GM10248 (cell line): ENCODE measurements at regions of chr15 and their contacts with region 1.

Region 1: DNA sequence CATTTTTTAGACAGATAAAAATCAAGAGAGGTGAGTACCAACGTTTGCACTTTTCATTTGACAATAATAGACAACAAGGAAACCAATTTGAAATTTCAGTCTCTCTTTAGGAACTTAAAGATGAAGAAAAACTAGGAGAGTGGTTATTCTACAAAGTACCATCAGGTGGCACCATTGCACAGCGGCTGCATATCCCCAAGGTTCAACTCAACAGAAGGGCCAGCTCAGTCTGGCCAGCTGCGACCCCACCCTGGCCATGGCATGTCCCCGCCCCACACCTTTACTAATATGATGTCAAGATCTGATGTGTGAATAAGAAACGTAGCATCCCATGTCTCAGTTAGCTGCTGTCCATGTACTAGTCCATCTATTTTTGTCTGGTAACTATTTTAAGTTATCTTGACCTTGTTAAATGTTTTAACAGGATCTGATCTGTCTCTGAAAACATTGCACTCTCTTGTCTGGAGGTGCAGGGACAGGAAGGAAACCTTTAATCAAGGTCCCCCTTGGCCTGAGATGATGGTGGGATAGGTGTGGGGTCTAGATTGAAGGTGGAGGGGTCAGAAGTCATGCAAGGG is 35.5 kb upstream of the CGNL1 start:
- DNase-seq: peak; percentile 59
- CTCF ChIP-seq: peak; percentile 75

Region 2: GRCh38 chr15:57327985-57328471 is 12.7 kb before region 1 on chr15:
- CTCF ChIA-PET with region 1: interaction called, 21 read pairs
- POLR2A ChIA-PET with region 1: no interaction called
- DNase-seq: no peak
- CTCF ChIP-seq: no peak

Region 3: GRCh38 chr15:57353317-57353804 is 12.6 kb after region 1 on chr15:
- CTCF ChIA-PET with region 1: interaction called, 17 read pairs
- POLR2A ChIA-PET with region 1: no interaction called
- DNase-seq: no peak
- CTCF ChIP-seq: no peak

Region 4: DNA sequence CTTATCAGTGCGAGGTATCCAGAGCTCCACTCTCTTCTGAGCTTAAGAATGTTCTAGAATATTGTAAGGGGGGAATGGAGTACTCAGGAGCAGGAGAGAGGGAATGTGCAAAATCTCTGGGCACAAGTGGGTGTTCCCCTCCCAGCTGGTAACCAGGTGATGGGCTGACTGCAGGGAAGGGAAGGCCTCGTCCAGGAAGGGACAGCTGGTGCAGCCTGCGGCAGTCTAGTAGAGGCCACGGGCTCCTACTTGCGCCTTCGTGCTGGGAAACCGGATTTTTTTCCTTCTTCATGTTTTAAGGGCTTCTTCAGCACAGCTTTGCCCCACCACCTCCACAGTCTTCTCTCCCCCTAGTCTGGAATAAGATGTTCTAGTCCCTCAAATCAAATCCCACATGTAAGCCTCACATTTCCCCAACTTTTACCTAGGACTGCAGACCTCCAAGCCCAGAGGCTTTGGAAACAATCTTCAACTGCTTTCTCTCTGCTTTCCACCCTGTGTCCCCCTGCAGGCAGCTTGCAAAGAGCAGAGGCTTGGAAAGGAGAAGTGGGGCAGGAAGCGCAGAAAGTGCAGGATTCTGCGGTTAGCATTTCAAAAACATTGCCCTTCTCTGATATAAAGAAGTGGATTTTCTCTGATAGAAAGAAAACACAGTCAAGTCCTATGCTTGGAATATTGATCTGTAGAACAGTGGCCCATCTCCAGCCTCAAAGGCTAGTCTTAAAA is 23.7 kb after region 1 on chr15:
- CTCF ChIA-PET with region 1: interaction called, 13 read pairs
- POLR2A ChIA-PET with region 1: no interaction called
- DNase-seq: no peak
- CTCF ChIP-seq: no peak

Region 5: DNA sequence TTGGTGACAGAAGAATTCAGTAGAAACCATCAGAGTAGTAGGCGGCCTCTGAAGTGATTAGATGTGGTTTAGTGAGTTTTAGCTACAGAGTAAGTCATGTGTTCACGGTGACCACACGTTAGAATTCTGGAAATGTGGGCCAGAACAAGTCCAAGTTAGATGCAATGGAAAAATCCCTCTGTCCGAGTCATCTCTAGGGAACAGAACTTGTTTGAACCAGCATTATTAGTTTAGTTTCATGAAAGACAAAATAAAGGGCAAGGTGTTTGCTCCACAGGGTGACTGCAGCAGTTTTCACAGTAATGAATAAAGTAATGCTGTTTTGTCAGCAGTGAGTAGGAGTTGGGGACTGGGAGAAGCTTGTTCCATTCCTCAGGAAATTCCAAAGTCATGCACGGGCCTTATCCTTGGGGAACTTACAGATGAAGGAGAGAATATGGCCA is 135.8 kb after region 1 on chr15:
- CTCF ChIA-PET with region 1: no interaction called
- POLR2A ChIA-PET with region 1: no interaction called
- DNase-seq: no peak
- CTCF ChIP-seq: no peak

Region 6: DNA sequence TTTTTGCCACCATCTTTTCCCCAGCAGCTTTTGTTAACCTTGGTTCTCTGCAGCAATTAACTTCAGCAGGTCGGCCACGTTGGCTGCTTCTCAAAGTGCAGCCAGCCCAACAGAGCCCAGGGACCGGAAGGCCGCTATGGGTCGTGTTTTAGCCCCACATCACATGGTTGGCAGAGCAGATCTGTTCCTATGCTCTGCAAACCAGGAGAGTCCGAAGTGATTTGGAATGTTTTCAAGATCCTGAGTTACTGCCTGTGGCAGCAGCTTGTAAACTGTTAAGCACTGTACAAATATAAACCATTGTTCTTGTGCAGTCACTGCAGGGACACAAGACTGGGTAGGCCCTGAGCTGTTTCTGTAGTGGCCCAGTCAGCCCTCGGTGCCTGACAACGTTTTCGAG is 181.4 kb after region 1 on chr15:
- CTCF ChIA-PET with region 1: interaction called, 134 read pairs
- POLR2A ChIA-PET with region 1: no interaction called
- DNase-seq: no peak
- CTCF ChIP-seq: no peak

Region 7: DNA sequence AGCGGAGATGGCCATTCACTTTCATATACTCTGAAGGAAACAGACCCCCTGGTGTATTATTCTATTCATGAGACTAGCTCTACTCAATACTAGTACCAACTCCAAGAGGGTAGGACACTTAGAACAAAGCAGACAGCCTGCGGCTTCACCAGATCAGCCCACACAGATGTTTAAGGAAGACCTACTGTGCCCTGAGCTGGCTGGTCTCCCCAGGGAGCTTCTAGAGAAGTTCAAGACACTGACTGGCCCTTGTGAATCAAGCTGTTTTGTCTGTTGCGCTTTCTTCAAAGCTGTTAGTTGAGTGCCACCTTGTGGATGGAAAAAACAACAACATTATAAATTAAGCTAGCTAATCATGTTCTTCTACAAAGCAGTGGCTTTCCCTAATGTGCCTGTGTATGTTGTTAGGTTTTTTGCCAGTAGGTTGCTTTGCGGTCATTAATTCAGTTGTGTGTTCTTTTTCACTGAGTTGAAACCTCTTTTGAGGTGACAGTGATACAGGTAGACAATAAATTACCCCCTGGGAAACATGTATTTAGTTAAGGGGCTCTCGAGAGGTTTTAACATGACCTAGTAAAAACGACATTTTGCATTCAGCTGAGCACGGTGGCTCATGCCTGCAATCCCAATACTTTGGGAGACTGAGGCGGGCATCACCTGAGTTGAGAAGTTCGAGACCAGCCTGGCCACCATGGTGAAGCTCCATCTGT is 186.8 kb after region 1 on chr15:
- CTCF ChIA-PET with region 1: interaction called, 134 read pairs
- POLR2A ChIA-PET with region 1: no interaction called
- DNase-seq: peak; percentile 58
- CTCF ChIP-seq: peak; percentile 43

Region 8: DNA sequence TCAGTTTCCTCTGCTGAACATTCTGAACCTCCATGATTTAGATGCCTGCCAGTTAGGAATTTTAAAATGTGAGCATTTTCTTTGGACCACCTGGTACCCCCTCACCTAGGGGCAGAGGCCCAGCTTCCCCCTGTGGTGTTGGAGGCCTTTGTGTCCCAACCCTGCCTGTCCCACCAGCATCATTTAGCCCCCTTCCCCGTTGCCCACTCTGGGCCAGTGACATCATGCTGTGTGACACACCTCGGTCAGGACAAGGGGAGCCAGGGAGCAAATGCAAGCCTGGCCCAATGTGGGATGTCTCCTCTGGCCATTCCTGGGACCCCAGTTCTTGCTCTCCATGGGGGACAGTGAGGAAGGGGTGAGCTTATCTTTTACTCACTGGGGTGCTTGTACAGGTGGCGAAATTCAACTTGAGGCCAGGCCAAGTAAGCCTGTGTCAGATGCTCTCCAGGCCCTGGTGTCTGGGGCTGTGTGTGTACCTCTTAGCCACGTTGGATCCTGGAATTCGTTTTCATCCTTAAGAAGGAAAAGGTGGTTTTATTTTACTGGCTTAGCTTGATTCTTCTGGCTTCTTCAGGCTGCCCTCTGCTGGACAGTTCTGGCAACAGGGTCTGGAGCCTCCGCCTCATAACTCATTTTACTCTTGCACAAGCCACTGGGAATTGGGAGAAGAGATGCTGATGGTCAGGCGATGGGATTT is 201.2 kb after region 1 on chr15:
- CTCF ChIA-PET with region 1: interaction called, 93 read pairs
- POLR2A ChIA-PET with region 1: no interaction called
- DNase-seq: peak; percentile 53
- CTCF ChIP-seq: peak; percentile 76